ENCODE measurements at regions of chr15 and their contacts with region 1.

Region 1: DNA sequence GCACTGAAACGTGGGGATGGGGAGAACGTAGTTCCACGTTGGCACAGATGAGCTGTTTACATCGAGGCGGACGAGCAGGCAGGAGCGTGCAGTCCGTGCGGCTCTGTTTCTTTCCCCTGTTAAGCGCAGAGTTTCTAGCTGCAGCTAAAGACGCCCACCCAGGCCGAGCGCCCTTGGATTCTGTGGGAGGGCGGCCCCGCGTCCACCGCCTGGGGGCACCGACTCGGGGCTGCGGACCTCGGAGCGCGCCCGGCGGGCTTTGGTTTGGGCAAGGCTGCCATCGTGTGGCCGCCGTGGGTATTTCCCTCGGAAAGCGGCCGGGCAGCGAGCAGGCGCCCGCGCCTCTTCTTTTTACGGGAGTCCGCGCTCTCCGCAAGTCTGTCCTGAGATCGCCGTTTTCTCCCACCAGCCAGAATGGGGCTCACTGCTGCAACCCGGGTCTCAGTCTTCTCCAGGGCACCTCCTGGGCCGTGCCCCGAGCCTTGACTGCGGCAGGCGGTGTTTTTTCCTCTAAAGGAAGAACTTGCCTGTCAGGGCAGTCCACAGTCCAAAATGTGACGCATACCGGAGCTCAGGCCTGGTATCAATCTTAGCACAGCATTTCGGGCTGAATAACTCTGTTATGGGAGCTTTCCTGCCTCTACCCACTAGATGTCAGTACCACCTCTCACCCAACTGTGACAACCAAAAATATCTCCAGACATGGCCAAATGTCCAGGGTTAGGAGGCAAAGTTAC is 219.9 kb upstream of the IGF1R start:
- DNase-seq: peak in 1 of 2 donors; percentile 87
- H3K4me3 ChIP-seq: peak overlapping the region; percentile 41 to 59
- H3K27ac ChIP-seq: peak overlapping the region; percentile 62 to 79
- H3K4me1 ChIP-seq: peaks cover 0 to 2% of the 10 kb centered on the region in 2 donors
- H3K27me3 ChIP-seq: no peaks in the 10 kb centered on the region
- CTCF ChIP-seq: peak; percentile 83 to 89 (median 87)

Region 2: GRCh38 chr15:97909291-97909891 is 519.0 kb before region 1 on chr15:
- intact Hi-C with region 1: loop called (anchors 10 kb)
- DNase-seq: peak in 1 of 2 donors; percentile 67
- H3K4me3 ChIP-seq: no peak overlapping the region
- H3K27ac ChIP-seq: no peak overlapping the region
- H3K4me1 ChIP-seq: no peaks in the 10 kb centered on the region
- H3K27me3 ChIP-seq: no peaks in the 10 kb centered on the region
- CTCF ChIP-seq: peak; percentile 31 to 69 (median 66)

Region 3: GRCh38 chr15:97960364-97961066 is 467.9 kb before region 1 on chr15 and contains the start of gene ARRDC4:
- intact Hi-C with region 1: loop called (anchors 5 kb)
- DNase-seq: peak; percentile 100
- H3K4me3 ChIP-seq: peak within 1 kb of the TSS; percentile 82 to 97
- H3K27ac ChIP-seq: peak within 1 kb of the TSS; percentile 77 to 84
- H3K4me1 ChIP-seq: peaks cover 0 to 5% of the 10 kb centered on the region in 2 donors
- H3K27me3 ChIP-seq: no peaks in the 10 kb centered on the region
- CTCF ChIP-seq: no peak
- total RNA-seq, gene ARRDC4: 29.7 TPM

Region 4: DNA sequence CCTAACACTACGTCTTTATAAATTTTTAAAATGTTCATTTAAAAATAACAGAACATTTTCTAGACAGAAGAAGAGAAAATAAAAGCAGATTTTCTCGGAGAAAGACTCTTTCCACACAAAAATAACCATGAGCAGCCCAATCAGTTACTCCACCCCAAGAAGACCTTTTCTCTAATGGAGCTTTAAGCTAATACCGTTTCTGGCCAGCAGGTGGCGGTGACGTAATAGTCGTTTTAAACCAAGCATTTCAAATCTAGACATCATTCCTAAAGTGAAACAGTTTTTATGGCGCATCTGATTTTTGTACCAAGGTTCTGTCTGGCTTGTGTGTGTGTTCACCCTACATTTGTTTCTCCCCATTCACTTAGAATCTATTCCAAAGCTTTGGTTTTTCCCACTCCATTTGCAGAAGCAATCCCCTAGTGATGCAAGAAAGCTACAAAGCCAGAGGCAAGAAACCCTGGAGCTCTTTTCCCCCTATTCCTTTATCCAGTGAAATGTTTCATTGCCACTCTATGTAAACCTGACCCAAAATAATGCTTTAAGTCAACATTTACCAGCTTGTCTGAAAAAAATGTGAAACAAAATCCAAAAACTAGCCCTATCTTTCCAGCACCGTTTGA is 116.7 kb before region 1 on chr15:
- intact Hi-C with region 1: loop called (anchors 2 kb)
- DNase-seq: peak in 1 of 2 donors; percentile 91
- H3K4me3 ChIP-seq: no peak overlapping the region
- H3K27ac ChIP-seq: no peak overlapping the region
- H3K4me1 ChIP-seq: no peaks in the 10 kb centered on the region
- H3K27me3 ChIP-seq: no peaks in the 10 kb centered on the region
- CTCF ChIP-seq: peak; percentile 55 to 76 (median 76)

Region 5: DNA sequence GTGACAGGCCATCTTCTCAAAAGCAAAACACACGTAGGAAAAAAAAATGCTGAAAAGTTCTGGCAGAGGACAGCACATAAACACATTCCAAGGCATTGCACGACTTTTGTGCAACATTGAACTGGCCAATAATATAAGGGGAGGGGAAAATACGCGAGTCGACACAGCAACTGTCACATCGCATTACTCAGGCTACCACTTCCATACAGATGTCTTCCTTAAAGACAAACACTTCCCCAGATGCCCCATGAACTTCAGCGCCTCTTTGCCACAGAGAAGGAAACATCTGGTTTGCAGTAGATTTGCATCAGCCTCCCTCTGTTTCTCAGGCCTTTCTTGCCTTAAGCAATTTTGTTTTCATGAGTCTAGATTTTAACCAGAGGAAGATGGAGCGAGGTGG is 75.5 kb after region 1 on chr15:
- intact Hi-C with region 1: no loop called
- DNase-seq: peak in 1 of 2 donors; percentile 77
- H3K4me3 ChIP-seq: no peak overlapping the region
- H3K27ac ChIP-seq: peak overlapping the region; percentile 60 to 67
- H3K4me1 ChIP-seq: peaks cover 5 to 24% of the 10 kb centered on the region in 2 donors
- H3K27me3 ChIP-seq: no peaks in the 10 kb centered on the region
- CTCF ChIP-seq: no peak